Activated CD4-positive, alpha-beta T cell treated with anti-CD3 and anti-CD28 coated beads for 36 hours (primary cell): ENCODE measurements at regions of chr1 and their contacts with region 1.

Region 1: GRCh38 chr1:241485554-241485992 is 34.0 kb downstream of the FH start:
- DNase-seq: no peak
- ATAC-seq: peak; percentile 49
- H3K4me3 Mint-ChIP-seq: no peak overlapping the region
- H3K27ac Mint-ChIP-seq: no peak overlapping the region
- H3K4me1 Mint-ChIP-seq: peaks cover 11% of the 10 kb centered on the region
- H3K27me3 Mint-ChIP-seq: peaks cover 7% of the 10 kb centered on the region

Region 2: GRCh38 chr1:240021709-240022108 is 1463.9 kb before region 1 on chr1:
- CTCF ChIA-PET with region 1: no interaction called
- POLR2A ChIA-PET with region 1: no interaction called
- intact Hi-C with region 1: loop called in 1 of 2 experiments (anchors 5 kb)
- DNase-seq: no peak
- ATAC-seq: no peak
- H3K4me3 Mint-ChIP-seq: no peak overlapping the region
- H3K27ac Mint-ChIP-seq: no peak overlapping the region
- H3K4me1 Mint-ChIP-seq: no peaks in the 10 kb centered on the region
- H3K27me3 Mint-ChIP-seq: peaks cover 8% of the 10 kb centered on the region

Region 3: DNA sequence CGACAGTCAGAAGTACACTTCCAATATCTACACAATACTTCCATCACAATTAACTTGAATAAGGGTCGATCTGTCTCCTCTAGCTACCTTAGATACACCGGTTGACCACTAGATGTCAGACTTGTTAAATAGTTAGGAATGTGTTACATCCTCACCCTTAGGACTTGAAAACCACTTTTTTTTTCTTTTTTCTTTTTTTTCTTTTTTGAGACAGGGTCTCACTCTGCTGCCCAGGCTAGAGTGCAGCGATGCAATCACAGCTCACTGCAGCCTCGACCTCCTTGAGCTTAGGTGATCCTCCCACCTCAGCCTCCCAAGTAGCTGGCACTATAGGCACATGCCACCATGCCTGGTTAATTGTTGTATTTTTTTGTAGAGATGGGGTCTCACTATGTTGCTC is 753.2 kb before region 1 on chr1:
- CTCF ChIA-PET with region 1: interaction called, 4 read pairs
- POLR2A ChIA-PET with region 1: no interaction called
- intact Hi-C with region 1: loop called in 1 of 2 experiments (anchors 2 kb)
- DNase-seq: no peak
- ATAC-seq: peak; percentile 69
- H3K4me3 Mint-ChIP-seq: no peak overlapping the region
- H3K27ac Mint-ChIP-seq: no peak overlapping the region
- H3K4me1 Mint-ChIP-seq: no peaks in the 10 kb centered on the region
- H3K27me3 Mint-ChIP-seq: peaks cover 3% of the 10 kb centered on the region

Region 4: GRCh38 chr1:240888039-240888786 is 597.4 kb before region 1 on chr1:
- CTCF ChIA-PET with region 1: no interaction called
- POLR2A ChIA-PET with region 1: no interaction called
- intact Hi-C with region 1: loop called in 1 of 2 experiments (anchors 2 kb)
- DNase-seq: peak; percentile 65
- ATAC-seq: no peak
- H3K4me3 Mint-ChIP-seq: no peak overlapping the region
- H3K27ac Mint-ChIP-seq: no peak overlapping the region
- H3K4me1 Mint-ChIP-seq: no peaks in the 10 kb centered on the region
- H3K27me3 Mint-ChIP-seq: no peaks in the 10 kb centered on the region

Region 5: GRCh38 chr1:241762713-241763339 is 277.3 kb after region 1 on chr1:
- CTCF ChIA-PET with region 1: no interaction called
- POLR2A ChIA-PET with region 1: no interaction called
- intact Hi-C with region 1: no loop called
- DNase-seq: no peak
- ATAC-seq: no peak
- H3K4me3 Mint-ChIP-seq: no peak overlapping the region
- H3K27ac Mint-ChIP-seq: no peak overlapping the region
- H3K4me1 Mint-ChIP-seq: no peaks in the 10 kb centered on the region
- H3K27me3 Mint-ChIP-seq: peaks cover 5% of the 10 kb centered on the region